Dendritic cell treated with granulocyte-macrophage colony-stimulating factor and Interleukin-4, amounts not matched to agents 40 ng/mL and 50 ng/mL, for 4 days (primary cell): ENCODE measurements at regions of chr9 and their contacts with region 1.

Region 1: DNA sequence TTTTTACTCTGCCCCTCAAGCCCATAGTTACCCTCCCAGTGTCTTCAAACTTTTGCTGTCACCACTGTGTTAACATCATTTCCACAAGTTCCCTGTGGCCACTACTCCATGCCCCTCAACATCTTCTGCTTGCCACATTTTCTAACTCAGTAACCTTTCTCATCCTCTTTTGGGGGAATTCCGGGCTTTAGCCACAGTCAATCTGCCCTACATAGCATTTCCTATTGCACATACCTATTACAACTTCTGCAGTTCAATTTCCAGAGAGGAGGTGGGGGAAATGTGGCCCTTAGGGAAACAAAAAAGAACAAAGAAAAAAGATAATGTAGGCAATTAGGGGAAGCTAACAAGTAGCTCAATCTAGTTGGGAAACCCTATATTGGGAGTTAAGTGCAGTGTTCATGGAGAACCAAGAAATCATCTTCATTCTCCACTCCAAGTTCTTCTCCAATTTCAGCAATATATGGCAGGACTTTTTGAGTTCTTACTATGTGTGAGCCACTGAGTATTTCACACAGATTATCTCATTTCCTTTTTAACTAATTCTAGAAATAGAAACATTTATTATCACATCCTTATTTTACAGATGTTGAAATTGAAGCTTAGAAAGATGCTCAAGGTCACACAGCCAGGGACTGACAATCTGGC is 40.2 kb upstream of the LPAR1 start:
- H3K4me3 Mint-ChIP-seq: no peak overlapping the region
- H3K27ac Mint-ChIP-seq: peak overlapping the region; percentile 80
- H3K4me1 Mint-ChIP-seq: peaks cover 33% of the 10 kb centered on the region
- H3K27me3 Mint-ChIP-seq: no peaks in the 10 kb centered on the region

Region 2: DNA sequence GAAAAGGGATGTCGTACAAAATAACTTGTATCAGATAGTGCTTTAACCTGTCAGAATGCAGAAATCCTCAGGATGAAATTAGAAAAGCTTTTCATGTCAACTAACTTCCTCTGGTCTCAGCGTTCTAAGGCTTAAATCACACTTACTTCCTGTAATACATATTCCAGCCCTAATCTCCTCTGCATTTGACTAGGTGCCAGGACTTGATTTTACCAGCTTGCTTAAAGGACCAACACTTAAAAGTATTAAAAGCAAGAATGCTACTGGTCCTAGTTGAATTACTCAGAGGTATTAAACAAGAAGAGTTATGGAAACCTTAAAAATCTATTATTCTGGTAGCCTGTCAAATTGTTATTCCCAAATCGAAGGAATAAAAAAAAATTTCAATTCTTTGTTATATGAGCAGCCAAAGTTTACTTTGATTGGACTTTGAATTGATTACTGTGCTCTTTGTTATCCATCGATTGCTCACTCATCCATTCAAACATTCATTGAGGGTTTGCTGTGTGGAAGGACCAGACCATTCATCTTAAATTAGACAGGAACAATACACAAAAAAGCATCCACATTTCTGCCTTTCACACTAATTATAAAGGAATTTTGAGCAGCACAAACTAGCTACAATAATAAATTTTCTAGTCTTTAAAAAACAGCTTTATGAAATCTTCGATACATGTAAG is 301.2 kb before region 1 on chr9:
- intact Hi-C with region 1: no loop called
- H3K4me3 Mint-ChIP-seq: no peak overlapping the region
- H3K27ac Mint-ChIP-seq: no peak overlapping the region
- H3K4me1 Mint-ChIP-seq: no peaks in the 10 kb centered on the region
- H3K27me3 Mint-ChIP-seq: peaks cover 7% of the 10 kb centered on the region

Region 3: DNA sequence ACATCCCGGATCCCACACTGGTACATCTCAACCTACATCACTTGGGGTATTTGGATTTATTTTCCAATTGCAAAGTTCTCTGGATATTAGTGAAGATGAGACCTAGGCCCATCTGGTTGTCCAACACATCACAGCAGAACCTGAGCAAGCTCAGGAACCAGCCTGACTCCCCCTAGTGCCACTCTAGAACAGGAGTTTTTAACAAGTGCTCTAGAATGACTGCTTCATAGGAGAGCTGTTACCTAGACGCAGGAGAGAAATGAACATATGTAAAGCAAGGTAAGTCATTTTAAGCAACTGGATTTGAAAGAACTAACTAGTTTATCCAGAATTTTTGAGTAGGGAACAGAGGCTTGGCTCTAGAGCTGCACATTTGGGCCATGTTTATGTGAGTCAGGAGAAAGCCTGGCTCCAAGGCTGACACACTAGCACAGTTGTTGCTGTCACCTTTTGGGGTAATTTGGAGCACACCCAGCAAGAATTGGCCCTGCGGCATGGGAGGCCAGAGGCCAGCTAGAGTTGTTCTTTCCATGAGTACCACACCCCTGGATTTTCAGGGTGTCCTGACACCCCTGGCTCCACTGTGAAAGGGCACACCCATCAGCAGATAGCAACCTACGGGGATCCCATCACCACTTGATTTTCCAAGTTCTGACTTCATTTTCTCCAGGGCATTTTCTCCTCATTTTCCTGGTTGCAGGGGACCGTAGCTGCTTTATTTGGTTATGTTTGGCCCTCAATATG is 70.7 kb after region 1 on chr9:
- intact Hi-C with region 1: loop called (anchors 10 kb)
- H3K4me3 Mint-ChIP-seq: no peak overlapping the region
- H3K27ac Mint-ChIP-seq: peak overlapping the region; percentile 77
- H3K4me1 Mint-ChIP-seq: peaks cover 37% of the 10 kb centered on the region
- H3K27me3 Mint-ChIP-seq: no peaks in the 10 kb centered on the region

Region 4: GRCh38 chr9:111276431-111277122 is 198.1 kb after region 1 on chr9:
- intact Hi-C with region 1: loop called (anchors 5 kb)
- H3K4me3 Mint-ChIP-seq: peak overlapping the region; percentile 71
- H3K27ac Mint-ChIP-seq: peak overlapping the region; percentile 92
- H3K4me1 Mint-ChIP-seq: peaks cover 53% of the 10 kb centered on the region
- H3K27me3 Mint-ChIP-seq: peaks cover 3% of the 10 kb centered on the region